B cell (primary cell): ENCODE measurements at regions of chr4 and their contacts with region 1.

Region 1: GRCh38 chr4:48195374-48195773 is 61.3 kb upstream of the TXK start:
- DNase-seq: no peak
- ATAC-seq: peak; percentile 12
- H3K4me3 ChIP-seq: peak overlapping the region in 1 of 5 experiments; percentile 38
- H3K4me3 Mint-ChIP-seq: peak overlapping the region; percentile 78
- H3K27ac ChIP-seq: peak overlapping the region; percentile 25 to 53
- H3K27ac Mint-ChIP-seq: peak overlapping the region; percentile 62
- H3K4me1 ChIP-seq: peaks cover 39 to 66% of the 10 kb centered on the region in 2 donors
- H3K4me1 Mint-ChIP-seq: peaks cover 74% of the 10 kb centered on the region
- H3K27me3 ChIP-seq: no peaks in the 10 kb centered on the region
- H3K27me3 Mint-ChIP-seq: no peaks in the 10 kb centered on the region
- CTCF ChIP-seq: no peak

Region 2: GRCh38 chr4:46676364-46676763 is 1519.0 kb before region 1 on chr4:
- CTCF ChIA-PET with region 1: no interaction called
- POLR2A ChIA-PET with region 1: no interaction called
- intact Hi-C with region 1: no loop called
- DNase-seq: no peak
- ATAC-seq: no peak
- H3K4me3 ChIP-seq: no peak overlapping the region
- H3K4me3 Mint-ChIP-seq: no peak overlapping the region
- H3K27ac ChIP-seq: no peak overlapping the region
- H3K27ac Mint-ChIP-seq: no peak overlapping the region
- H3K4me1 ChIP-seq: no peaks in the 10 kb centered on the region
- H3K4me1 Mint-ChIP-seq: no peaks in the 10 kb centered on the region
- H3K27me3 ChIP-seq: no peaks in the 10 kb centered on the region
- H3K27me3 Mint-ChIP-seq: no peaks in the 10 kb centered on the region
- CTCF ChIP-seq: no peak

Region 3: DNA sequence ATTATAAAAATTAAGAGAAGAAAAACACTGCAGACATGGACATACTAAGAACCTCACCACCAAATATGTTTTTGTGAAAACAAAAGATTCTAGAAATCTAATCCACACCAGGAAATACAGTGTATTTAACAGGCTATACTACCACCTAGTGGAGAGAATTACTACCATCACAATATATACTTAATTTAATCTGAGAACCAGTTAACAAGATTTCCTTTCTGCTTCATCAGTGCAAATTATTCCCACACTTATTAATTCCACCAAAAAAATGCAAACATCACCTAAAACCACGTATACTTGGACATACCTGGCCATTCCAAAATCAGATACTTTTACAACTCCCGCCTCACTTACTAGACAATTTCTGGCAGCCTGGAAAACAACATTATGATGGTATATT is 54.3 kb before region 1 on chr4:
- CTCF ChIA-PET with region 1: no interaction called
- POLR2A ChIA-PET with region 1: no interaction called
- intact Hi-C with region 1: loop called (anchors 10 kb)
- DNase-seq: peak; percentile 53
- ATAC-seq: peak; percentile 37
- H3K4me3 ChIP-seq: no peak overlapping the region
- H3K4me3 Mint-ChIP-seq: no peak overlapping the region
- H3K27ac ChIP-seq: no peak overlapping the region
- H3K27ac Mint-ChIP-seq: no peak overlapping the region
- H3K4me1 ChIP-seq: peaks cover 27 to 31% of the 10 kb centered on the region in 2 donors
- H3K4me1 Mint-ChIP-seq: peaks cover 34% of the 10 kb centered on the region
- H3K27me3 ChIP-seq: no peaks in the 10 kb centered on the region
- H3K27me3 Mint-ChIP-seq: no peaks in the 10 kb centered on the region
- CTCF ChIP-seq: peak; percentile 84

Region 4: GRCh38 chr4:48212165-48212564 is 16.8 kb after region 1 on chr4:
- CTCF ChIA-PET with region 1: interaction called, 4 read pairs
- POLR2A ChIA-PET with region 1: no interaction called
- intact Hi-C with region 1: loop called (anchors 2 kb)
- DNase-seq: peak; percentile 65
- ATAC-seq: peak; percentile 79
- H3K4me3 ChIP-seq: peak overlapping the region in 4 of 5 experiments; percentile 7 to 35 (median 20)
- H3K4me3 Mint-ChIP-seq: peak overlapping the region; percentile 79
- H3K27ac ChIP-seq: peak overlapping the region; percentile 41 to 79
- H3K27ac Mint-ChIP-seq: peak overlapping the region; percentile 74
- H3K4me1 ChIP-seq: peaks cover 26 to 27% of the 10 kb centered on the region in 2 donors
- H3K4me1 Mint-ChIP-seq: peaks cover 33% of the 10 kb centered on the region
- H3K27me3 ChIP-seq: no peaks in the 10 kb centered on the region
- H3K27me3 Mint-ChIP-seq: no peaks in the 10 kb centered on the region
- CTCF ChIP-seq: no peak

Region 5: GRCh38 chr4:48546336-48546735 is 351.0 kb after region 1 on chr4:
- CTCF ChIA-PET with region 1: no interaction called
- POLR2A ChIA-PET with region 1: no interaction called
- intact Hi-C with region 1: no loop called
- DNase-seq: peak; percentile 19
- ATAC-seq: no peak
- H3K4me3 ChIP-seq: no peak overlapping the region
- H3K4me3 Mint-ChIP-seq: no peak overlapping the region
- H3K27ac ChIP-seq: no peak overlapping the region
- H3K27ac Mint-ChIP-seq: no peak overlapping the region
- H3K4me1 ChIP-seq: no peaks in the 10 kb centered on the region
- H3K4me1 Mint-ChIP-seq: no peaks in the 10 kb centered on the region
- H3K27me3 ChIP-seq: no peaks in the 10 kb centered on the region
- H3K27me3 Mint-ChIP-seq: no peaks in the 10 kb centered on the region
- CTCF ChIP-seq: peak; percentile 47